PC-3 (cell line): ENCODE measurements at regions of chr1 and their contacts with region 1.

Region 1: GRCh38 chr1:84298328-84298683 is 3.2 kb upstream of the SAMD13 start:
- DNase-seq: peak; percentile 47
- ATAC-seq: peak; percentile 67
- H3K4me3 ChIP-seq: peak overlapping the region; percentile 82
- H3K27ac ChIP-seq: peak overlapping the region; percentile 80
- H3K4me1 ChIP-seq: peaks cover 49% of the 10 kb centered on the region
- H3K27me3 ChIP-seq: no peaks in the 10 kb centered on the region
- CTCF ChIP-seq: no peak

Region 2: DNA sequence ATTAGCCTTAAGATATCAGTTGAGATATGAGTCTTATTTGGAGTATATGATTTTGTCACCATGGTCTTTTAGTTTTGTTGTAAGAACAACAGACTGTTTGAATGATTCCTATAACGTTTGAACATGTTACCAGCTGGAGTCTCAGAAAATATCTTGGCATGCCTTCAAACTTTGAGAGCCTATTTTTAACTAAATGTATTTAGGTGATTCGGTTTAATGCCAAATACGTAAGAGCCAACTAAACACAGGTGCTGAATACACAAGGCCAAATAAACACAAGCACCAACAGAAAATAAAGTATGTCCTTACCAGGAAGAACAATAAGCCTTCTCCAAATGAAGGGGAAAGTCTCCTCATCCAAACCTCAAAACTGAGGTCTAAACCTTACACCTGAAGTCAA is 105.6 kb before region 1 on chr1:
- CTCF ChIA-PET with region 1: no interaction called
- POLR2A ChIA-PET with region 1: no interaction called
- intact Hi-C with region 1: loop called (anchors 5 kb)
- DNase-seq: no peak
- ATAC-seq: no peak
- H3K4me3 ChIP-seq: no peak overlapping the region
- H3K27ac ChIP-seq: no peak overlapping the region
- H3K4me1 ChIP-seq: no peaks in the 10 kb centered on the region
- H3K27me3 ChIP-seq: no peaks in the 10 kb centered on the region
- CTCF ChIP-seq: no peak

Region 3: GRCh38 chr1:84247425-84248220 is 50.7 kb before region 1 on chr1:
- CTCF ChIA-PET with region 1: no interaction called
- POLR2A ChIA-PET with region 1: interaction called, 5 read pairs
- intact Hi-C with region 1: loop called (anchors 2 kb)
- DNase-seq: peak; percentile 98
- ATAC-seq: peak; percentile 95
- H3K4me3 ChIP-seq: peak overlapping the region; percentile 51
- H3K27ac ChIP-seq: peak overlapping the region; percentile 98
- H3K4me1 ChIP-seq: peaks cover 35% of the 10 kb centered on the region
- H3K27me3 ChIP-seq: no peaks in the 10 kb centered on the region
- CTCF ChIP-seq: no peak

Region 4: DNA sequence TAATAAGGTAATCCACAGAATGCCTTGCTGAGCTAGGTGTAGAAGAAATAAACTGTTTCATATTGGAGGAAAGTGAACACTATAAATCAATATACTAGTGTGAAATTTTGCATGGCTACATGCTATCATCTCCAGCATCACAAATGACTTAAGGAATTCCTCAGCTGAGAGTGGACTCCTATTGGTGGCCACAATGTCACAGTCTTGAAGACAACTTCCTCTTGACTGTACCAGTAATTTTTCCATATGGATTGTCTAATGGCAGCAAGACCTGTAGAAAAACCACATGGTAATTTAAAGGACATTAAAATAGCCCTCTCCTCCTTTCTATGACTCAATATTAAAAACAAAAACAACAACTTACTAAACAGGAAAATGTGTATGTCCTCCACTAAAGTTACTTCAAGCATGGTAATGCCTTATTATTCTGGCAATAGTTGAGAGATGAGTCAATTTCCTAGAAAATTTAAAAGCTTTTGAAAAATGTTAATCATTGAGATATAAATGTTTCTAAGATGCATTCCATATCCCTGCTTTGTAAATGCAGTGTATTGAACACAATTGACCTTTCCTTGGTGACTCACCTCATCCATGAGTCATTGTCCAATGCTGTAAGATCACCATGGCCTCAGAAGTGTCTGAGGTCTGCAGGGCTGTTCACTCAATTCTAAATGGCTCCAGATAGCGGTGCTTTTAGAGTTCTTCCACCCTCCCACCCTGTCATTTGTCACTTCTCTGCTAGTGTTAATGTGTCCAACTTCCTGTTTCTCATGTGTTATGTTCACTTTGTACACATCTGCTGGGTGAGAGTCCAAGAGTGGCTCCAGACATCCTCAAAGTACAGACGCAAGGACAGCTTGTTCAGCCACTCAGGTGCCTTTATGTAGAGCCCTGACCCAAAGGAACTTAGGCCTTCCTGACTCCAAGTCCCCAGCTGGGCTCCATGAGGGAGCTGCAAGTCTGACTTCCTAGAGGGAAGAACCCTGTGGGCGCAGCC is 67.2 kb after region 1 on chr1:
- CTCF ChIA-PET with region 1: interaction called, 3 read pairs
- POLR2A ChIA-PET with region 1: no interaction called
- intact Hi-C with region 1: loop called (anchors 2 kb)
- DNase-seq: peak; percentile 99
- ATAC-seq: peak; percentile 94
- H3K4me3 ChIP-seq: no peak overlapping the region
- H3K27ac ChIP-seq: peak overlapping the region; percentile 70
- H3K4me1 ChIP-seq: peaks cover 36% of the 10 kb centered on the region
- H3K27me3 ChIP-seq: no peaks in the 10 kb centered on the region
- CTCF ChIP-seq: no peak

Region 5: DNA sequence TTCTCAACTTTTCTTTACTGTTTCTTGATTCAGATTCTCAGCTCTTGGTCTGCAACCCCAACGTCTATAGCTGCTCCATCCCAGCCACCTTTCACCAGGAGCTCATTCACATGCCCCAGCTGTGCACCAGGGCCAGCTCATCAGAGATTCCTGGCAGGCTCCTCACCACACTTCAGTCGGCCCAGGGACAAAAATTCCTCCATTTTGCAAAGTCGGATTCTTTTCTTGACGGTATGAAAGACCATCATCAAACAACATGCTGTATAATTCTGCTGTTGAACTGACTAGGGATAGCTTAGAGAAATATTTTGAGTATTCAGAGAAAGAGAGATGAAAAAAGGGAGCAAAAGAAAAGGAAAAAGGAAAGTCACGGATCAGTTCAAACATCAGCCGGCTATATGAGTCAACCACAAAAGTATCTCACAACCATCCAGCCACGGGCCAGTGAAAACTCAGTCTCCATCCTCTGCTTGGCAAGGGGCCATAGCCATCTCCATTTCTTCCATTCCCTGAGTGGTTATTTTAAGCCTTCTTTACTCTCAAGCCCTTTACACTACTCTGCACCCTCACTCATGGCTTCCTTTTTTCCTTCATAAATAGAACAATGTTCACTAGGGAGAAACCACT is 114.1 kb after region 1 on chr1:
- CTCF ChIA-PET with region 1: no interaction called
- POLR2A ChIA-PET with region 1: no interaction called
- intact Hi-C with region 1: loop called (anchors 5 kb)
- DNase-seq: no peak
- ATAC-seq: no peak
- H3K4me3 ChIP-seq: no peak overlapping the region
- H3K27ac ChIP-seq: no peak overlapping the region
- H3K4me1 ChIP-seq: peaks cover 41% of the 10 kb centered on the region
- H3K27me3 ChIP-seq: no peaks in the 10 kb centered on the region
- CTCF ChIP-seq: no peak